GM10248 (cell line): ENCODE measurements at regions of chr11 and their contacts with region 1.

Region 1: GRCh38 chr11:82494988-82495432 is 238.7 kb downstream of the FAM181B start:
- DNase-seq: peak; percentile 16
- CTCF ChIP-seq: peak; percentile 9

Region 2: GRCh38 chr11:82507288-82507687 is 12.3 kb after region 1 on chr11:
- CTCF ChIA-PET with region 1: interaction called, 15 read pairs
- POLR2A ChIA-PET with region 1: no interaction called
- DNase-seq: no peak
- CTCF ChIP-seq: no peak